MCF 10A (cell line): ENCODE measurements at regions of chr19 and their contacts with region 1.

Region 1: GRCh38 chr19:42244347-42245220 is 2.2 kb upstream of the GSK3A start:
- DNase-seq: peak; percentile 97
- H3K4me3 Mint-ChIP-seq: peak overlapping the region; percentile 79
- H3K27ac Mint-ChIP-seq: peak overlapping the region; percentile 81
- H3K4me1 Mint-ChIP-seq: peaks cover 37% of the 10 kb centered on the region
- H3K27me3 Mint-ChIP-seq: no peaks in the 10 kb centered on the region
- CTCF ChIP-seq: peak; percentile 60

Region 2: GRCh38 chr19:42132851-42133528 is 111.6 kb before region 1 on chr19:
- CTCF ChIA-PET with region 1: interaction called, 7 read pairs
- POLR2A ChIA-PET with region 1: interaction called, 12 read pairs
- intact Hi-C with region 1: loop called (anchors 1 kb)
- DNase-seq: peak; percentile 57
- H3K4me3 Mint-ChIP-seq: peak overlapping the region; percentile 47
- H3K27ac Mint-ChIP-seq: no peak overlapping the region
- H3K4me1 Mint-ChIP-seq: peaks cover 15% of the 10 kb centered on the region
- H3K27me3 Mint-ChIP-seq: peaks cover 8% of the 10 kb centered on the region
- CTCF ChIP-seq: peak; percentile 98

Region 3: DNA sequence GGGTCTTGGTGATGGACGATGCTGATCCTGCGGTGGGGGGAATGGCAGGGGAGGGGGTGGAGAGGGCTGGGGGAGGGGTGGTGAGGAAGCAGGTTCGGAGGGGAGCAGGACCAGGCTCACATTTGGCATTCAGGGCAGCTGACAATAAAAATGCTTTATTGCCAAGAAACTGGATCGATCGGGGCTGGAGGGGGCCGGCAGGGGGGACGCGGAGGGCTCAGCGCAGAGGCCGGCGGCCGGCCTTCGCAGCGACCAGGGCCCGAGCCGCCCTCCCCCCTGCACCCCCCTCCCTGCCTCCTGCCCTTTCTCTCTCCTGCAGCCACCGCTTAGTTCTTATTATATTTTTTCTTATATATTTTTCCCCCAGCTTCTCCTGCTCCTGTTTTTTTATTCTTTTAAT is 94.2 kb before region 1 on chr19:
- CTCF ChIA-PET with region 1: no interaction called
- POLR2A ChIA-PET with region 1: no interaction called
- intact Hi-C with region 1: no loop called
- DNase-seq: no peak
- H3K4me3 Mint-ChIP-seq: no peak overlapping the region
- H3K27ac Mint-ChIP-seq: no peak overlapping the region
- H3K4me1 Mint-ChIP-seq: peaks cover 6% of the 10 kb centered on the region
- H3K27me3 Mint-ChIP-seq: peaks cover 73% of the 10 kb centered on the region
- CTCF ChIP-seq: no peak

Region 4: GRCh38 chr19:42254989-42255765 is 10.6 kb after region 1 on chr19 and contains the start of gene ERF:
- CTCF ChIA-PET with region 1: interaction called, 5 read pairs
- POLR2A ChIA-PET with region 1: interaction called, 22 read pairs
- intact Hi-C with region 1: no loop called
- DNase-seq: peak; percentile 94
- H3K4me3 Mint-ChIP-seq: peak within 1 kb of the TSS; percentile 85
- H3K27ac Mint-ChIP-seq: peak within 1 kb of the TSS; percentile 35
- H3K4me1 Mint-ChIP-seq: peaks cover 22% of the 10 kb centered on the region
- H3K27me3 Mint-ChIP-seq: no peaks in the 10 kb centered on the region
- CTCF ChIP-seq: no peak
- total RNA-seq, gene ERF: 27.8 and 35.1 TPM in 2 replicates

Region 5: DNA sequence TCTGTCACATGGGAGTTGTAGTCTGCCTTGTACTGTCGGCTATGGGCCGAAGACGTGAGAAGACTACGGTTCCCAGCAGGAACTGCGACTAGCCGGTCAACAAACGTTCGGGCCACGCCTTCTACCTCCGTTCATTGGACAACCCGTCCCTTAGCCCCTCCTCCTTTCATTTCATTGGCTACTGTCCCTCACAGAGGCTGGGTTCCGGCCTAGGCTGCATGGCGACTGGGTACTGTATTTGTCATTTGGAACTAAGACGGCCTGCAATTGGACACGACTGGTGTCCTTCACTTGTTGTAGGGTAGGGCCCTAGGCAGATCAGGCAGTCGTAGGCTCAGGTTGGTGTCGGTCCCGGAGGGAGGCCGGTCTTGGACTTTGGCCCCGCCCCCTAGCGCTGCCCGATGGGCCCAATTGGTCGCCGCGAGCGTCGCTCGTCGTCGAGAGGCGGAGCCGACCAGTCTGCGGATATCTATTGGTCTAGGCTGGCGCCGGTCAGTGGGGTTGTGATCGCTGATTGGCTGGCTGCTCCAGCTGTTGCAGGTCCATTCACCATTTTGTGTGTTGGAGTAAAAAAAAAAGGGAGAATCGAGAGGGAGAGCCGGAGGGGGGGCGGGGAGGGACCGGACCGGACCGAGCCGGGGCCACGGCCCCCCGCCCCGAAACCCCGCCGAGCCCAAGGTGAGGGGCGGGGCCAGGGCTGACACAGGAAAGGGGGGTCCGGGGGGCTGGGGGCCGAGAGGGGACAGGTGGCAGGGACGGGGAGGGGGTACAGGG is 24.3 kb after region 1 on chr19 and contains the start of gene CIC:
- CTCF ChIA-PET with region 1: interaction called, 5 read pairs
- POLR2A ChIA-PET with region 1: interaction called, 56 read pairs
- intact Hi-C with region 1: no loop called
- DNase-seq: peak; percentile 100
- H3K4me3 Mint-ChIP-seq: no peak within 1 kb of the TSS
- H3K27ac Mint-ChIP-seq: no peak within 1 kb of the TSS
- H3K4me1 Mint-ChIP-seq: peaks cover 23% of the 10 kb centered on the region
- H3K27me3 Mint-ChIP-seq: no peaks in the 10 kb centered on the region
- CTCF ChIP-seq: no peak
- total RNA-seq, gene CIC: 66.9 and 67.9 TPM in 2 replicates

Region 6: DNA sequence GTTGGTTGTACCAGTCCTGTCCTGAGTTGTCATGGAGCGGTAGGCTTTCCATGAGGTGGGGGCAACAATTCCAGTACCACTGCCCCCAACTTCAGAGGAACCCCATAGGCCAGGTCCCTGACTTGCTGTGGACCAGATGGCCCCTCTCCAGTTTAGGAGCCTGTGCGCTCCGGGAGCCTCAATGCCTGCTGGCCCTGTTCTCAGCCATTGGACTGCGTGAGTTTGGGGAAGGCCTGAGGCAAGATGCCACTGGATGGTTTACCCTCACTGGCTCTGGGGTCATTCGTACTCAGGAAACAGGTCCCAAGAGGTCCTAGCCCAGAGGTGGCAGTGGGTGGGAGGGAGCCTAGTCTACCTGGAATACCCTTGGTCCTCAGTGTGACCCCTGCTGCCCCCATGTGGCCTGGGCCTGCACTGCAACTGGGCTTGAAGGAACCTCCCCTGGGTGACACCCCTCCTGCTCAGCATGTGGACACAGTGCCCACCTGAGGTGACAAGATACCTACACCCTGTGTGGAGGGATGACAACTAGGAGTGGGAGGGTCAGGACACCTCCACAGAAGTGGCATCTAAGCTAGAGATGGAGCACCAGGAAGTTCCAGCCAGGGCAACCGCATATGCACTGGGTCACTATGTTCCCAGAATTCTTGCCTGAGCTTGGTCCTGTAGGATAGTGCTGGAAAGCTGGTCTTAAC is 51.4 kb after region 1 on chr19:
- CTCF ChIA-PET with region 1: interaction called, 44 read pairs
- POLR2A ChIA-PET with region 1: interaction called, 11 read pairs
- intact Hi-C with region 1: loop called (anchors 5 kb)
- DNase-seq: peak; percentile 76
- H3K4me3 Mint-ChIP-seq: no peak overlapping the region
- H3K27ac Mint-ChIP-seq: no peak overlapping the region
- H3K4me1 Mint-ChIP-seq: peaks cover 6% of the 10 kb centered on the region
- H3K27me3 Mint-ChIP-seq: no peaks in the 10 kb centered on the region
- CTCF ChIP-seq: peak; percentile 93

Region 7: DNA sequence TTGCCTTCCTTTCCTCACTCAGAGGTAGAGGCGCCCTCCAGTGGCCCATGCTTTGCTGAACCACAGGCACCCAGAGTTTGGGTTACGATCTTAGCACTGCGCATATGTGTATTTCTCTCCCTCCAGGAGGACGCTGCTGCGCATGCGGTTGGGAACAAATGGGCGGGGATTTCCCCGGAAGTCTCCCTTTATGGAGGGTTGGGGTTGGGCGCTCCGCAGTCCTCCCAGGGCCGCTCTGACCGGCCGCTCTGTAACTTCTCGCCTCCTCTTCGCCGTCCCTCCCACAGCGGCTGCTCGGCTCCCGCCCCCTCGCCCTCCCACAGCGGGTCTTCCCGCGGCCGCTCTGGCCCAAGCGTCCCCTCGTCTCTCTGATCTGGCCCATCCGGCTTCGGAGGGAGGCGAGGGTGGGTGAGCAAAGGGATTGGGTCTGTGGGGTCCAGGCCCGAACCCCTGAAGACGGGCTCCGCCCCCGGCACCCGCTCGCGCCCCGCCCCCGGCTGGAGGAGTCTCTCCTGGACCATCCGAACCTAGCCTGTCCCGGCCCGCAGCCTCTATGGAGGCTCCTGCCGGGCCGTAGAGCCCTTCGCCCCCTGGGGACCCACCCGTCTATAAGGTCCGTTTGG is 80.8 kb after region 1 on chr19 and contains the start of gene MEGF8:
- CTCF ChIA-PET with region 1: interaction called, 6 read pairs
- POLR2A ChIA-PET with region 1: interaction called, 12 read pairs
- intact Hi-C with region 1: loop called (anchors 1 kb)
- DNase-seq: peak; percentile 99
- H3K4me3 Mint-ChIP-seq: peak within 1 kb of the TSS; percentile 87
- H3K27ac Mint-ChIP-seq: peak within 1 kb of the TSS; percentile 73
- H3K4me1 Mint-ChIP-seq: peaks cover 14% of the 10 kb centered on the region
- H3K27me3 Mint-ChIP-seq: no peaks in the 10 kb centered on the region
- CTCF ChIP-seq: peak; percentile 76
- total RNA-seq, gene MEGF8: 13.0 and 20.6 TPM in 2 replicates

Region 8: GRCh38 chr19:42433503-42434260 is 189.1 kb after region 1 on chr19:
- CTCF ChIA-PET with region 1: interaction called, 6 read pairs
- POLR2A ChIA-PET with region 1: no interaction called
- intact Hi-C with region 1: loop called (anchors 1 kb)
- DNase-seq: peak; percentile 90
- H3K4me3 Mint-ChIP-seq: no peak overlapping the region
- H3K27ac Mint-ChIP-seq: no peak overlapping the region
- H3K4me1 Mint-ChIP-seq: peaks cover 11% of the 10 kb centered on the region
- H3K27me3 Mint-ChIP-seq: no peaks in the 10 kb centered on the region
- CTCF ChIP-seq: peak; percentile 77